A673 (cell line): ENCODE measurements at regions of chr1 and their contacts with region 1.

Region 1: DNA sequence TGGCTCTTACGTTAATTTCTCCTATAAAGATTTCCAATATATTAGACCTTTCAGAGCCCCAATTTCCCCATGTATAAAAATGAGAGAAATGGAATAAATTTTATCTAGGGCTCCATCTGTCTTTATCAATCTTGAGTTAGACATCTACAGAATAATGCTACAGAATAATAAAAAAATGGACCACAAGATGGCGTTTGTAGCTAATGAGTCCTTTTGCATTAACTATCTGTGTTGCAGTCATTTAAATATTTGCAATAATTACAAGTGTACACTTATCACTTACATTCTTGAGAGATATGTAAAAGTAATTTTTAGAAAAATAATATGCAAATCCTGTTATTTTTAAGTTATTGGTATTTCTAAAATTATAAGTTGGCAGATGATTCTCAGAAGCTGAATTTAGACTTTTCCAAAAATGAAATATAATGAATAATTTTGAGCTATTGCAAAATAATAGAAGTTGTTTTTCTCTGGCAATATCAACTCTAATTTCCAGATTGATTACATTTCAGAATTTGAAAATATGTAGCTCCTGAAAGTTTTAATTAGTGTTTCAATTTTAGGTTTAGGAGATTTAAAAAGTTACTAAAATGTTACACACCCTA is 87.7 kb downstream of the SNX7 start:
- DNase-seq: peak; percentile 39
- H3K4me3 ChIP-seq: no peak overlapping the region
- H3K27ac ChIP-seq: no peak overlapping the region
- H3K4me1 ChIP-seq: no peaks in the 10 kb centered on the region
- H3K27me3 ChIP-seq: no peaks in the 10 kb centered on the region
- CTCF ChIP-seq: peak; percentile 64

Region 2: DNA sequence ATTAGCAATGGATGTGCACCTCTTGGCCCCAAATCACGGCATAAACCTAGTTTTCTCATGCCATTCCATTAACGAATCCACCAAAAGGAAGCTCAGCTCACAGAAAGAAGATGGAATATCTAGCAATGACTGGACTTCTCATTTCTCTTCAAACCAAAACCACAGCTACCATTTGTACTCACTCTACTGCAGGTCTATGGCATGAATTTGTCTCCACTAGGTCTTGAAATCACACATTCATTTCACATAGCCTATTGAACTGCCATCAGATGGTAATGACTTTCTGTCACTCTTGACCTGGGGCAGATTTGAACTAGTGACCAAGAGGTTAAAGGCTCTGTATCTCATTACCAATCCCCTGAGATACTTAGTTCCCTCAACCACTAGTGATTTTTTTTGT is 1211.1 kb before region 1 on chr1:
- CTCF ChIA-PET with region 1: no interaction called
- POLR2A ChIA-PET with region 1: no interaction called
- intact Hi-C with region 1: no loop called
- DNase-seq: no peak
- H3K4me3 ChIP-seq: no peak overlapping the region
- H3K27ac ChIP-seq: no peak overlapping the region
- H3K4me1 ChIP-seq: no peaks in the 10 kb centered on the region
- H3K27me3 ChIP-seq: no peaks in the 10 kb centered on the region
- CTCF ChIP-seq: no peak

Region 3: DNA sequence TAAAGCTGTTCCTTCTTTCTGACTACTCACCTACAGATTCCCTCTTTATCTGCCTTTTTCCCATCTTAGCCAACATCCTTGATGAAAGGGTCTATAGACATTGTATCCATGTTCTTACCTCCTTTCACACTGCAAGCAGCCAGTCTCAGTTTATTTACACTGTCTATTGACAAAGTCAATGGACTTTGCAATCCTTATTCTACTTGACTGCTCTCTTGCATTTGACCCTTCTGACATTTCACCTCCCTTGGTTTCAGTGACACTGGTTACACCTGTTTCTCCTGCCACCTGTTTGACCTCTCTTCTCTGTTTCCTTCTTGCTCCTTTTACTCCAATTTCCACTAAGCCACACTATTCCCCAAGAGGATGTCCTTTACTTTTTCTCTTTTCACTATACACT is 311.7 kb before region 1 on chr1:
- CTCF ChIA-PET with region 1: no interaction called
- POLR2A ChIA-PET with region 1: no interaction called
- intact Hi-C with region 1: no loop called
- DNase-seq: no peak
- H3K4me3 ChIP-seq: no peak overlapping the region
- H3K27ac ChIP-seq: no peak overlapping the region
- H3K4me1 ChIP-seq: no peaks in the 10 kb centered on the region
- H3K27me3 ChIP-seq: no peaks in the 10 kb centered on the region
- CTCF ChIP-seq: no peak

Region 4: DNA sequence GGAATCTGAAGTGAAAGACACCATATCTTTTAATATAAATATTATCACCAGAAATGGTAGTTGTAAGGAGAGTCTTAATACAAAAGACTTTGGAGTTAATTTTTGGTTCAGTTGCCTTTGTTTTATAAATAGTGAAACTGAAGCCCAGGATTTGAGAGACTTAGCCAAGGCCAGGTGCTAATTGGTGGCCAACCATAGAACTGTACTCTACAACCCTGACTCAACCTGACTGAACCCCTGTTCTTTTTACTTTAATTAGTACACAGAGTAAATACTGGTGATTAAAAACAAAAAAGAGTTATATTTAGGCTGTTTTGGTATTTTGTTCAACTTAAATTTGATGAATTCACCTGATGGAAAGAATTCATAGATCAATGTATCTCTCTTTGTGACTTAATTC is 11.4 kb before region 1 on chr1:
- CTCF ChIA-PET with region 1: interaction called, 11 read pairs
- POLR2A ChIA-PET with region 1: no interaction called
- intact Hi-C with region 1: no loop called
- DNase-seq: no peak
- H3K4me3 ChIP-seq: no peak overlapping the region
- H3K27ac ChIP-seq: no peak overlapping the region
- H3K4me1 ChIP-seq: no peaks in the 10 kb centered on the region
- H3K27me3 ChIP-seq: no peaks in the 10 kb centered on the region
- CTCF ChIP-seq: no peak

Region 5: DNA sequence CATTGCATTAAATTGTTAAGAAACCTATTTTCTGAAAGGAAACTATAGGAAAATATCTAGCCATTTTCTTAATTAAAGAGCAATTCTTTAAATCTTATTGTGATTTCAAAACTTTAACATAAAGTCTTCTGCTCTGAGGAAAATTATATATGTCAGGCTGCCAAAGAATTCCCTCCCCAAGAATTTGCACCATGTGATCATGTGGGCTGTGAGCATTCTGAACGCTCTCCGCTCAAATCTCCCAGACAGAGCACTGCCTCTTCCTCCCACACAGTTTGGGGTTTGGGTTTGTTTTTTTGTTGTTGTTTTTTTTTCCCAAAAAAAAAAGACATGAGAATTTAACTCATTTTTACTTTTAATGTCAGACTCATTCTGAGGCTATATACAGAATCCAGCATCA is 740.8 kb after region 1 on chr1:
- CTCF ChIA-PET with region 1: no interaction called
- POLR2A ChIA-PET with region 1: no interaction called
- intact Hi-C with region 1: loop called (anchors 5 kb)
- DNase-seq: no peak
- H3K4me3 ChIP-seq: no peak overlapping the region
- H3K27ac ChIP-seq: no peak overlapping the region
- H3K4me1 ChIP-seq: no peaks in the 10 kb centered on the region
- H3K27me3 ChIP-seq: peaks cover 4% of the 10 kb centered on the region
- CTCF ChIP-seq: no peak